Posterior vena cava (tissue), 2 donors: ENCODE measurements at regions of chr2 and their contacts with region 1.

Region 1: DNA sequence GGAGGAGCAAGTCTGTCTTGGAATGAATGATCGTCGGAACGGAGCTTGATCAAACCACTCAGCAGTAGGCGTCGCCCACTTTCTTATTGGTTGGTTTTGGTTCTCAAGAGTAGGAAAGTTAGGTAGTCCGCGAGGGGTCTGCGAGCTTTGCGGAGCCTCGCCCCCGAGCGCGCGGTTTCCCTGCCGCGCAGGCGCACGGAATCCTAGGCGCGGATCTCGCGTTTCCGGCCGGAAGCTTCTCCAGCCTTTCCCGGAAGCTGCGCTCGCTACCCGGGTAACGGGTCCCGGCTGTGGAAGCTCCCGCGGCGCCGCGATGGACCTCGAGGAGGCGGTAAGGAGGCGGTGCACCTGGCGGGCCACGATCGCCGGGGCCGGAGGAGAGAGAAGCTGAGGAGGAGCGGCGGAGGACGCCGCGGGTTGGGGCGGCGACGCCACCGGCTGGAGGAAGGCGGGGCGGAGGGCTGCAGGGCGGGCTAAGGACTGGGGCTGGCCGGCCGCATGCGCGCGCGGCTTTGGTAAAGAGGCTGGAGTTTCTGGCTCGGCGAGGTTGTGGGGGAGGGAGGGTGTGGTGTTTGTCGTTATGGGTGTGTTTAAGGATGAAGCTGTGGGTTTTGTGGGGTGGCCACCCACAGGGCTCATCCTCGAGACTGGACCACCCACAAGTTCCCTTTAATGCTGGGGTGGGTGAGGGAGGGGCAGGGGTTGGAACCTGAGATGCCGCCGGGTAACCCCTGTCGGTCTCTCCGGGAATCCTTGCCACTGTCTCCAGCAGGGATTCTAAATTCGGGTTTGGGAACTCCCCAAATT is at the start of gene TAF1B:
- DNase-seq: peak; percentile 95
- total RNA-seq, gene TAF1B: 20.8 to 21.6 TPM

Region 2: DNA sequence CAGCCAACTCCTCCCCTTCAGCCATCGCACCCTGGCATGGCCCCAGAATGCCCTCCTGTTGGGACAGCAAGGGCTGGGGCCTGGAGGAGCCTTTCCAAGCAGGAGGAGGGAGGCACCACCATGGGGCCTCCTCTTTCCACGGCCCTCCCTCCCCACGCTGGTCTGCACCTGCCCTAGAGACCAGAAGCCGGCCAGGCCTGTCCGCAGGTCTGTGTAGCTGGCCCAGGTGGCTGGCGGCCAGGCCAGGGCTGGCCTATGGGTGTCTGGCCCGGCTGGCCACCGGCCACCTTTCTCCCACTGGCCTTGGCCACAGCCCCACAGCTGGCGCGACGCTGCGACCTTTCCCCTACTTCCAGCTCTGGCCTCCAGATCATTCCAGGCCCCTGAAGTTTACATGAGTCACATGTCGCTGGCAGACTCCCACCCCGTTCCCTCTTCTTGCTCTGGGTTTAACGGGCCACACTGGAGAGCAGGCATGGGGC is 166.4 kb after region 1 on chr2:
- intact Hi-C with region 1: loop called in 1 of 2 experiments (anchors 1 kb)
- DNase-seq: peak; percentile 93